ENCODE measurements at regions of chr5 and their contacts with region 1.

Region 1: GRCh38 chr5:94782383-94782782 is 163.9 kb downstream of the SLF1 start:
- DNase-seq: no peak
- ATAC-seq: no peak
- H3K4me3 Mint-ChIP-seq: no peak overlapping the region
- H3K27ac Mint-ChIP-seq: no peak overlapping the region
- H3K4me1 Mint-ChIP-seq: no peaks in the 10 kb centered on the region
- H3K27me3 Mint-ChIP-seq: peaks cover 26% of the 10 kb centered on the region

Region 2: GRCh38 chr5:94793113-94793815 is 10.9 kb after region 1 on chr5:
- CTCF ChIA-PET with region 1: interaction called, 10 read pairs
- POLR2A ChIA-PET with region 1: no interaction called
- DNase-seq: peak; percentile 62
- ATAC-seq: peak; percentile 100
- H3K4me3 Mint-ChIP-seq: peak overlapping the region; percentile 60
- H3K27ac Mint-ChIP-seq: peak overlapping the region; percentile 93
- H3K4me1 Mint-ChIP-seq: peaks cover 48% of the 10 kb centered on the region
- H3K27me3 Mint-ChIP-seq: peaks cover 2% of the 10 kb centered on the region

Region 3: GRCh38 chr5:94893412-94894135 is 111.2 kb after region 1 on chr5:
- CTCF ChIA-PET with region 1: no interaction called
- POLR2A ChIA-PET with region 1: no interaction called
- DNase-seq: no peak
- ATAC-seq: no peak
- H3K4me3 Mint-ChIP-seq: no peak overlapping the region
- H3K27ac Mint-ChIP-seq: no peak overlapping the region
- H3K4me1 Mint-ChIP-seq: no peaks in the 10 kb centered on the region
- H3K27me3 Mint-ChIP-seq: no peaks in the 10 kb centered on the region

Measured in activated CD8-positive, alpha-beta T cell treated with anti-CD3 and anti-CD28 coated beads, Interleukin-2, amount 10 ng/mL, durations not matched to agents 7 days and 5 days (primary cell).